ENCODE measurements at regions of chr1 and their contacts with region 1.

Region 1: DNA sequence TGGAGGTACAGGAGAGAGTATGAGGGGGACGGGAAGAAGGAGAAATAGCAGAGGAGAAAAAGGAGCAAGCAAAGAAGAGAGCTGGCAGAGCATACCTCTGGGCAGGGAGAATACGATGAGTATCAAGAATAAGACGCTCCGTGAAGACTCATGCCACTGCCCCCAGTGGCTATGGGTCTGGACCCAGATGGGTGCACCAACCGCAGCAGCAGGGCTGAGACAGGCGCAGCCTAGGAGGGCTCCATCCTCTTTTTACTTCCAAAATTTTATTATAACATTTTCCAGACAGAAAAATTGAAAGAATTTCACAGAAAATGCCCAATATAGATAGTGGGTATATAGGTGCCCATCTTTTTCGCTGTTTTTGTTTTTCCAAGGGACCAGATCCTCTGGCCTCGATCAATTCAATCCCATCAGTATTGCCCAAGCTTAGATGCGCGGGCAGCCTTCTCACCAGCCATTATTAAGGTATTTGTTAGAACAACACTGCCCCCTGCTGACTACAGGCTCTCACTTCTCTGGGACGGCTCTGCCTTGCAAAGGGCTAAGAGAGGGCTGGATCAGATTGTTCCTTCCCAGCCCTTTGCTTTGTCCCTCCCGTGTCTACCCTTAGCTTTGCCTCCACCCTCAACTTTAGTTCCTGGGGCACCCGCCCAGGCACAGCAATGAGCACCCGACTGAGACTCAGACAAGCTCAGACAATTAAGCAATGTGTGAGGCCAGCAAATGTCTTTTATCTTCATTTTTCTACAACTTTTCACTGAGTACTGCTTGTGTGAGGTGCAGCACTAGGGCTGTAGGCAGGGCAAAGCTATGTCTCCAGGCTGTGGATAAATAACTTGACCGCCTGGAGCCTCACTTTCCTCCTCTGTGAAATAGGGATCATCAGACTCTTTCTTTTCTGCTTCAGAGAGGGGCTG is 17.5 kb upstream of the CAMK1G start:
- DNase-seq: peak; percentile 31 to 73 (median 67)
- ATAC-seq: peak; percentile 84
- H3K4me3 ChIP-seq: no peak overlapping the region
- H3K4me3 Mint-ChIP-seq: peak overlapping the region in 1 of 10 donors; percentile 29
- H3K27ac ChIP-seq: no peak overlapping the region
- H3K27ac Mint-ChIP-seq: peak overlapping the region in 1 of 9 donors; percentile 15
- H3K4me1 ChIP-seq: peaks cover 0 to 11% of the 10 kb centered on the region in 2 donors
- H3K4me1 Mint-ChIP-seq: peaks cover 6 to 26% (median 11%) of the 10 kb centered on the region in 7 donors
- H3K27me3 ChIP-seq: no peaks in the 10 kb centered on the region
- H3K27me3 Mint-ChIP-seq: peaks cover 17 to 47% (median 38%) of the 10 kb centered on the region in 5 donors

Region 2: GRCh38 chr1:208461680-208462079 is 1104.3 kb before region 1 on chr1:
- CTCF ChIA-PET with region 1: no interaction called
- POLR2A ChIA-PET with region 1: no interaction called
- intact Hi-C with region 1: no loop called
- DNase-seq: no peak
- ATAC-seq: no peak
- H3K4me3 ChIP-seq: no peak overlapping the region
- H3K4me3 Mint-ChIP-seq: no peak overlapping the region
- H3K27ac ChIP-seq: no peak overlapping the region
- H3K27ac Mint-ChIP-seq: no peak overlapping the region
- H3K4me1 ChIP-seq: no peaks in the 10 kb centered on the region
- H3K4me1 Mint-ChIP-seq: no peaks in the 10 kb centered on the region
- H3K27me3 ChIP-seq: no peaks in the 10 kb centered on the region
- H3K27me3 Mint-ChIP-seq: peaks cover 0 to 29% (median 17%) of the 10 kb centered on the region in 5 donors

Region 3: GRCh38 chr1:208652296-208653160 is 913.5 kb before region 1 on chr1:
- CTCF ChIA-PET with region 1: interaction called, 6 read pairs
- POLR2A ChIA-PET with region 1: no interaction called
- intact Hi-C with region 1: loop called in 1 of 2 experiments (anchors 5 kb)
- DNase-seq: peak in 5 of 9 donors; percentile 8 to 26 (median 17)
- ATAC-seq: peak; percentile 54
- H3K4me3 ChIP-seq: no peak overlapping the region
- H3K4me3 Mint-ChIP-seq: no peak overlapping the region
- H3K27ac ChIP-seq: no peak overlapping the region
- H3K27ac Mint-ChIP-seq: no peak overlapping the region
- H3K4me1 ChIP-seq: no peaks in the 10 kb centered on the region
- H3K4me1 Mint-ChIP-seq: no peaks in the 10 kb centered on the region
- H3K27me3 ChIP-seq: peaks cover 0 to 13% of the 10 kb centered on the region in 2 donors
- H3K27me3 Mint-ChIP-seq: peaks cover 5 to 47% (median 30%) of the 10 kb centered on the region in 5 donors

Region 4: GRCh38 chr1:208929575-208929974 is 636.4 kb before region 1 on chr1:
- CTCF ChIA-PET with region 1: no interaction called
- POLR2A ChIA-PET with region 1: no interaction called
- intact Hi-C with region 1: no loop called
- DNase-seq: no peak
- ATAC-seq: no peak
- H3K4me3 ChIP-seq: no peak overlapping the region
- H3K4me3 Mint-ChIP-seq: no peak overlapping the region
- H3K27ac ChIP-seq: no peak overlapping the region
- H3K27ac Mint-ChIP-seq: peak overlapping the region in 1 of 9 donors; percentile 26
- H3K4me1 ChIP-seq: no peaks in the 10 kb centered on the region
- H3K4me1 Mint-ChIP-seq: no peaks in the 10 kb centered on the region
- H3K27me3 ChIP-seq: no peaks in the 10 kb centered on the region
- H3K27me3 Mint-ChIP-seq: peaks cover 3 to 10% (median 8%) of the 10 kb centered on the region in 5 donors

Region 5: GRCh38 chr1:209202830-209203439 is 363.1 kb before region 1 on chr1:
- CTCF ChIA-PET with region 1: interaction called, 11 read pairs
- POLR2A ChIA-PET with region 1: no interaction called
- intact Hi-C with region 1: loop called in 1 of 2 experiments (anchors 2 kb)
- DNase-seq: peak in 3 of 9 donors; percentile 3 to 13 (median 10)
- ATAC-seq: no peak
- H3K4me3 ChIP-seq: no peak overlapping the region
- H3K4me3 Mint-ChIP-seq: no peak overlapping the region
- H3K27ac ChIP-seq: no peak overlapping the region
- H3K27ac Mint-ChIP-seq: no peak overlapping the region
- H3K4me1 ChIP-seq: no peaks in the 10 kb centered on the region
- H3K4me1 Mint-ChIP-seq: peaks cover 0 to 7% (median 4%) of the 10 kb centered on the region in 7 donors
- H3K27me3 ChIP-seq: no peaks in the 10 kb centered on the region
- H3K27me3 Mint-ChIP-seq: peaks cover 24 to 53% (median 38%) of the 10 kb centered on the region in 5 donors

Region 6: DNA sequence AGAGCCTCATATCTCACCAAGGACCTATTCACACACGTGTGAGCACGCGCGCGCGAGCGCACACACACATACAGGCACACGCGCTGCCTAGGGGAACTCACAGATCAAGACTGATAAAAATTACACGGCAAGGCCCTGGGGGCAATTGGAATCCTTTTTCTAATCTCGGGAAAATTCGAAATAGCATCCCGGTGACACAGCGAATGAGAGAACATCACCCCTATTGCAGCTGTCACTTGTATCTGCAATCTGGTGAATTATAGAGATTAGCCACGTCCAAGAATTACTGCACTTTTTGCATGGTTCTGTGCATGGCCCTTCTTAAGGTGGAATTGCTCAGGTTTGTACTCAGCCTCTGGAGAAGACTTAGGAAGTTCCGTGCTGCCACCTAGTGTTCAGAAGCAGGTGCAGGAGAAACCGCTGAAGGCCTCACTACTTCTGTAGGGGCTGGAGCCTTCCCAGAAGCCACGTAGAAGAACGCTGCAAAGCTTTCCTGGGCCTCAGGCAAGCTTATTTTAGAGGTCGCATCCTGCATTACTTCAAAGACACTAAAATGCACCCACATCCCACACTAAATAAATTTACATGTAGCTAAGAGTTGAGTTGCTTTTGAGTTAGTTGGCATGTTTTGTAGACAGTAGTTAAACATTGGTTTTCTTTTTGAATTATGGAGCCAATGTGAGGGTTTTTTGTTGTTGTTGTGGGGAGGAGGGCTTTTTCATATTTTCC is 211.7 kb before region 1 on chr1:
- CTCF ChIA-PET with region 1: no interaction called
- POLR2A ChIA-PET with region 1: no interaction called
- intact Hi-C with region 1: loop called in 1 of 2 experiments (anchors 1 kb)
- DNase-seq: peak in 7 of 9 donors; percentile 7 to 31 (median 13)
- ATAC-seq: peak; percentile 70
- H3K4me3 ChIP-seq: no peak overlapping the region
- H3K4me3 Mint-ChIP-seq: no peak overlapping the region
- H3K27ac ChIP-seq: no peak overlapping the region
- H3K27ac Mint-ChIP-seq: no peak overlapping the region
- H3K4me1 ChIP-seq: no peaks in the 10 kb centered on the region
- H3K4me1 Mint-ChIP-seq: peaks cover 0 to 5% (median 2%) of the 10 kb centered on the region in 7 donors
- H3K27me3 ChIP-seq: no peaks in the 10 kb centered on the region
- H3K27me3 Mint-ChIP-seq: peaks cover 0 to 9% (median 5%) of the 10 kb centered on the region in 5 donors

Region 7: DNA sequence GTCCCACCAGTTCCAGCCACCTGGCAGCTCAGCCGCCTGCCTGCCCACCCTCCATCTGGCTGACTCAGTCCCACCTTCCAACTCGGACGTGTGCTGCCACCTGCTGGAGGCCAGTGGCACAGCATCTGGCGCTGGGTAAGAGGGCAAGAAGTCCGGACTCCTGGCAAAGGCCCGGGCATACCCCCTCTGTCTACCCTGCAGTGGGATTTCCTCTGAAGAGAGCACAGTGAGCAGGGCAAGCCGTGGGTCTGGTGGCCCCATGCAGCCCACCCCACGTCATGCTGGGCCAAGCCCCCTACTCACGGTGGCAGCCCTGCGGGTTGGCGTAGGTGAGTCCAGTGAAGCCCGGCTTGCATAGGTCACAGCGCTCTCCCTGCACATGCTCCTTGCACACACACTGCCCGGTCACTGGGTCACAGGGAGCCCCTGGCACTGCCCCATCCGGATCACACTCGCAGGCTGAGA is 61.7 kb after region 1 on chr1:
- CTCF ChIA-PET with region 1: interaction called, 5 read pairs
- POLR2A ChIA-PET with region 1: no interaction called
- intact Hi-C with region 1: loop called in 1 of 2 experiments (anchors 1 kb)
- DNase-seq: peak; percentile 29 to 85 (median 61)
- ATAC-seq: peak; percentile 79
- H3K4me3 ChIP-seq: no peak overlapping the region
- H3K4me3 Mint-ChIP-seq: no peak overlapping the region
- H3K27ac ChIP-seq: no peak overlapping the region
- H3K27ac Mint-ChIP-seq: no peak overlapping the region
- H3K4me1 ChIP-seq: no peaks in the 10 kb centered on the region
- H3K4me1 Mint-ChIP-seq: peaks cover 0 to 14% (median 3%) of the 10 kb centered on the region in 7 donors
- H3K27me3 ChIP-seq: no peaks in the 10 kb centered on the region
- H3K27me3 Mint-ChIP-seq: no peaks in the 10 kb centered on the region

Region 8: DNA sequence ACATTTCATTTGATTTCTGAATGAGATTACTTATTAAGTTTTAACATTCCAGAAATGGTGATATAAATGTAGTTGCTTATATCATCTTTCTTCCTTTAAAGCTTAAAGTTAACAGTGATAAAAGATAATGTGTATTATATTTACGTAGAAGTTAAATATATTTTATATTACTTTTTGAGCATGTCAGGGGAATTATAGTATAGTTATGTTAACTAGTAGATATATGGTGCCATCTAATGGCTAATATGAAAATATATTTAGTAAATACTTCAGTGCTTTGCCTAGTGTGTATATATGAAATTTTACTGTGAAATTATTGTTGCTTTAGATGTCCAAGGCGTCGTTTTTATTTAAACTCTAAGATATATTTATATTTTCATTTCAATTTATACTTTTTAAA is 423.5 kb after region 1 on chr1:
- CTCF ChIA-PET with region 1: no interaction called
- POLR2A ChIA-PET with region 1: no interaction called
- intact Hi-C with region 1: loop called in 1 of 2 experiments (anchors 5 kb)
- DNase-seq: no peak
- ATAC-seq: no peak
- H3K4me3 ChIP-seq: no peak overlapping the region
- H3K4me3 Mint-ChIP-seq: no peak overlapping the region
- H3K27ac ChIP-seq: no peak overlapping the region
- H3K27ac Mint-ChIP-seq: no peak overlapping the region
- H3K4me1 ChIP-seq: no peaks in the 10 kb centered on the region
- H3K4me1 Mint-ChIP-seq: no peaks in the 10 kb centered on the region
- H3K27me3 ChIP-seq: no peaks in the 10 kb centered on the region
- H3K27me3 Mint-ChIP-seq: peaks cover 0 to 45% (median 43%) of the 10 kb centered on the region in 5 donors

Region 9: GRCh38 chr1:210311726-210312493 is 745.9 kb after region 1 on chr1:
- CTCF ChIA-PET with region 1: no interaction called
- POLR2A ChIA-PET with region 1: no interaction called
- intact Hi-C with region 1: loop called in 1 of 2 experiments (anchors 2 kb)
- DNase-seq: no peak
- ATAC-seq: no peak
- H3K4me3 ChIP-seq: peak overlapping the region; percentile 42
- H3K4me3 Mint-ChIP-seq: peak overlapping the region in 9 of 10 donors; percentile 66 to 94 (median 88)
- H3K27ac ChIP-seq: no peak overlapping the region
- H3K27ac Mint-ChIP-seq: peak overlapping the region in 3 of 9 donors; percentile 9 to 43 (median 33)
- H3K4me1 ChIP-seq: no peaks in the 10 kb centered on the region
- H3K4me1 Mint-ChIP-seq: peaks cover 2 to 7% (median 5%) of the 10 kb centered on the region in 7 donors
- H3K27me3 ChIP-seq: no peaks in the 10 kb centered on the region
- H3K27me3 Mint-ChIP-seq: peaks cover 10 to 56% (median 20%) of the 10 kb centered on the region in 5 donors

Measured in naive thymus-derived CD4-positive, alpha-beta T cell (primary cell).